ENCODE measurements at regions of chr13 and their contacts with region 1.

Region 1: DNA sequence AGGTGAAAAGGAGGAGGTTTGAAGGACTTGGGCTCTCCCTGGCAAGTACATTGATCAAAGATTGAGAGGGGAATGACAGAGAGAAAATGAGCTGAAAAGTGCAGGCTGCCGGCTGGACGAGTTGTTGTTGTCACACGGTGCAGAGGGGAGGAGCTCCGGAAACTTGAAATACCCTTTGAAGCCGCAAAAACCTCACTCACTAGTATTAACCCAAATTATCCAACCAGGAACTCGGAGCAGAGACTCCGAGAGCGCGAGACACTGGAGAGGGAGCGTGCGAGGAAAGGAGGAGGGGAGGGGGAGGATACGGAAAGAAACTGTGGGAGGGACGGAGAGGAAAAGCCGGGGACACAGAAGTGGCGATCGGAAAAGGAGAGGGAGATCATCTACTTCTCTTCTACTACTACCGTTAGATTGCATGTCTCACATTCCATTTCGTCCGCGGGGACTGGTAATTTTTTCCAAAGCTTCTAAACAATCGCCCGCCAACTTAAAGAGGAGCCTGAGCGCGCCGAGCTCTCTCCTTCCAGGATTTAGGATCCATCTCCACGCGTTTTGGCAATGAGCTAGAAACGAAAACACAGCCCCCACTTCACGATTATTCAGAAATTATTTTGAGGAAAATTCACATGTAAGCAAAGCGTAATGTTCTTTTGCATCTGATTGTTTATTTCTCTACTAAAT is at the start of gene DACH1:
- DNase-seq: peak; percentile 18 to 46
- H3K4me3 ChIP-seq: peak within 1 kb of the TSS; percentile 48
- H3K4me3 Mint-ChIP-seq: peak within 1 kb of the TSS; percentile 91
- H3K27ac Mint-ChIP-seq: no peak within 1 kb of the TSS
- H3K4me1 ChIP-seq: no peaks in the 10 kb centered on the region; the same call in 1 of the 2 replicates
- H3K4me1 Mint-ChIP-seq: peaks cover 19% of the 10 kb centered on the region
- H3K27me3 ChIP-seq: peaks cover 11% of the 10 kb centered on the region
- H3K27me3 Mint-ChIP-seq: peaks cover 36% of the 10 kb centered on the region
- CTCF ChIP-seq: no peak
- total RNA-seq, gene DACH1: 1.2 and 1.3 TPM in 2 replicates

Region 2: GRCh38 chr13:71618159-71618558 is 249.1 kb before region 1 on chr13:
- CTCF ChIA-PET with region 1: no interaction called
- POLR2A ChIA-PET with region 1: no interaction called
- intact Hi-C with region 1: no loop called
- DNase-seq: no peak
- H3K4me3 ChIP-seq: no peak overlapping the region
- H3K4me3 Mint-ChIP-seq: no peak overlapping the region
- H3K27ac Mint-ChIP-seq: no peak overlapping the region
- H3K4me1 ChIP-seq: no peaks in the 10 kb centered on the region
- H3K4me1 Mint-ChIP-seq: no peaks in the 10 kb centered on the region
- H3K27me3 ChIP-seq: no peaks in the 10 kb centered on the region
- H3K27me3 Mint-ChIP-seq: no peaks in the 10 kb centered on the region
- CTCF ChIP-seq: no peak

Region 3: GRCh38 chr13:71879129-71879535 is 11.9 kb after region 1 on chr13:
- CTCF ChIA-PET with region 1: no interaction called
- POLR2A ChIA-PET with region 1: no interaction called
- intact Hi-C with region 1: loop called (anchors 1 kb)
- DNase-seq: peak in 1 of 2 experiments; percentile 45
- H3K4me3 ChIP-seq: no peak overlapping the region
- H3K4me3 Mint-ChIP-seq: no peak overlapping the region
- H3K27ac Mint-ChIP-seq: no peak overlapping the region
- H3K4me1 ChIP-seq: no peaks in the 10 kb centered on the region
- H3K4me1 Mint-ChIP-seq: peaks cover 6% of the 10 kb centered on the region
- H3K27me3 ChIP-seq: no peaks in the 10 kb centered on the region
- H3K27me3 Mint-ChIP-seq: peaks cover 3% of the 10 kb centered on the region
- CTCF ChIP-seq: peak; percentile 55 to 65